Activated CD4-positive, alpha-beta T cell treated with anti-CD3 and anti-CD28 coated beads, Interleukin-2, amount 10 ng/mL, durations not matched to agents 24 days and 14 days (primary cell): ENCODE measurements at regions of chr5 and their contacts with region 1.

Region 1: GRCh38 chr5:78899922-78900362 is 85.2 kb downstream of the ARSB start:
- DNase-seq: peak; percentile 78
- H3K4me3 Mint-ChIP-seq: no peak overlapping the region
- H3K27ac Mint-ChIP-seq: no peak overlapping the region
- H3K4me1 Mint-ChIP-seq: no peaks in the 10 kb centered on the region
- H3K27me3 Mint-ChIP-seq: no peaks in the 10 kb centered on the region

Region 2: DNA sequence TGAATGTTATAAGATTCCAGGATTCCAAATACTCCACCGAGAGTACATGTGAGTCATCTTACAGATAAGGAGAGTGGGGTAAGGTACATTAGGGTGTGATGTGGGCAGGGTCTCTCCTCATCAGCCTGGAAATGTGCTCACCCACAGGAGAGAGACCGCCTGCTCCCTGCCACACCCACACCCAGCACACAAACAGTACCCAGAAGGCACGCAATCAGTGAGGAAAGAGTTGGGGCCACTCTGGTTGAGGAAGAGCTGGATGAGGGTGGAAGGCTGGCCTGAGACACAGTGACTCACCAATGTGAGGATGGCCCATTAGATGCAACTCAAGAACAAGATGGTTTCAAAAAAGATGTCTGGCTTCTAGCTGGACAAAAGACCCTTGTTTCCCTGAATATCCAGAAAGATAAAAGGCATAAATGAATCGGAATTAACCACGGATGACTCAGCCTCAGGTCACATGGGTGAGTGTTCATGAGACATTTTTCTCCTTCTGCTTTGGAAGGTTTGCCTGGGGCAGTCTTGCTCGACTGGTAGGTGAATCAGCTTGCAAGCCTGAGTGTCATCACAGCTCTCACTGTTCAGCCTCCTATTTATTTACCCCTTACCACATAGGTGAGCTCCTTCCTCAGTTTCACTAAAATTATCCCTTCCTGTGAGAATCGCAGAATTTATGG is 200.2 kb before region 1 on chr5:
- intact Hi-C with region 1: no loop called
- DNase-seq: no peak
- H3K4me3 Mint-ChIP-seq: no peak overlapping the region
- H3K27ac Mint-ChIP-seq: no peak overlapping the region
- H3K4me1 Mint-ChIP-seq: no peaks in the 10 kb centered on the region
- H3K27me3 Mint-ChIP-seq: no peaks in the 10 kb centered on the region

Region 3: DNA sequence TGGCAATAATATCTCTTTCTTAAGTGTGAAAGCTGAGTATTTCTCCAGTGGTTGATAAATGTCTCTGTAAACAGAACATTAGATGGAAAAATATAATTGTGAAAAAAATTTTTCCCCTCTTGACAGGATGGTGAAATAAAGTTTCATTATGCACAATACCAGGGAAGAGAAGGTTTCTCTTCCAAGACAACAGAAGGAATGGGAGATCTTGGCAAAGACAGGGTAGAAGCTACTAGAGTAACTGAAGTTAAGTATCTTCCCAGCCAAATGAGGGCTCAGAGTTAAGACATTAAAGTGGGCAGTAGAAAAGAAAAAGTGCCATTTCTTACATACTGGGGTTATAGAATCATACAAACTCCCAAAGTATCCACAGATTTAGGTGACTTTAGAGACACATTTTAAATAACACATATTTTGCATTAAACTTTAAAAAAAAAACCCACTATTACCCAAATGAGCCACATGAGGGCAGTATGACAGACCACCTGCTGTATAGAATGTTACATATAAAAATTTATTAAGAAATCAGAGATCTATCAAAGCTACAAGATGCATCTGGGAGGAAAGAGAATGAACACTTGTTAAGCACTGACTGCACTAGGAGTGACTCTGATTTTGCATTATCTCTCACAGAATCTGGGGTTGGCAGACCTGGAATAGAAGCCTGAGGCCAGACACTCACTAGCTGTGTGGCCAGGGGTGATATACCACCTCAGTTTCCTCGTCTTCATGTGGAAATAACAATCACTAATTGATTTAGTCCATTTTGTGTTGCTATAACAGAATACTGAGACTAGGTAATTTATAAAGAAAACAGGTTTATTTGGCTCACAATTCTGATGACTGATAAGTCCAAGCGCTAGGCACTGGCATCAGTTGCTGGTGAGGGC is 13.4 kb before region 1 on chr5:
- intact Hi-C with region 1: no loop called
- DNase-seq: no peak
- H3K4me3 Mint-ChIP-seq: no peak overlapping the region
- H3K27ac Mint-ChIP-seq: no peak overlapping the region
- H3K4me1 Mint-ChIP-seq: peaks cover 9% of the 10 kb centered on the region
- H3K27me3 Mint-ChIP-seq: peaks cover 2% of the 10 kb centered on the region

Region 4: DNA sequence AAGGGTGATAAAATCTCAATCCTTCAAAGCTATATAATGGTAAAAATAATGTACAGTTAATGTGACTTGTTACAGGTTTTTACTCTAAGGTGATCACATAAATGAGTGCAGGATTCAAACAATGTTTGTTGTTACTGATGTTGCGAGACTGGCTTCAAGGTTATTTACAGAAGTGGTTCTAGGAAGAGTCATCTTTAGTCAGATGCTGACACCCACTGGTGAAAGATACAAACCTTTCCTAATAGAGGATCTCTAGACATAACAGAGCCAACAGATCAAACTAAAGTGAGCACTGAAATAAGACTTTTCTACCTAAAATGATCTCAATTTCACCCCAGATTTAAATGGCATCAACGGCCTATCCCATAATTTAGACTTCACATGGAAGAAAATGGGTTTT is 64.9 kb after region 1 on chr5:
- intact Hi-C with region 1: loop called (anchors 2 kb)
- DNase-seq: no peak
- H3K4me3 Mint-ChIP-seq: no peak overlapping the region
- H3K27ac Mint-ChIP-seq: no peak overlapping the region
- H3K4me1 Mint-ChIP-seq: no peaks in the 10 kb centered on the region
- H3K27me3 Mint-ChIP-seq: no peaks in the 10 kb centered on the region

Region 5: GRCh38 chr5:79109527-79110492 is 209.9 kb after region 1 on chr5:
- intact Hi-C with region 1: loop called (anchors 5 kb)
- DNase-seq: peak; percentile 67
- H3K4me3 Mint-ChIP-seq: no peak overlapping the region
- H3K27ac Mint-ChIP-seq: no peak overlapping the region
- H3K4me1 Mint-ChIP-seq: peaks cover 3% of the 10 kb centered on the region
- H3K27me3 Mint-ChIP-seq: peaks cover 63% of the 10 kb centered on the region

Region 6: DNA sequence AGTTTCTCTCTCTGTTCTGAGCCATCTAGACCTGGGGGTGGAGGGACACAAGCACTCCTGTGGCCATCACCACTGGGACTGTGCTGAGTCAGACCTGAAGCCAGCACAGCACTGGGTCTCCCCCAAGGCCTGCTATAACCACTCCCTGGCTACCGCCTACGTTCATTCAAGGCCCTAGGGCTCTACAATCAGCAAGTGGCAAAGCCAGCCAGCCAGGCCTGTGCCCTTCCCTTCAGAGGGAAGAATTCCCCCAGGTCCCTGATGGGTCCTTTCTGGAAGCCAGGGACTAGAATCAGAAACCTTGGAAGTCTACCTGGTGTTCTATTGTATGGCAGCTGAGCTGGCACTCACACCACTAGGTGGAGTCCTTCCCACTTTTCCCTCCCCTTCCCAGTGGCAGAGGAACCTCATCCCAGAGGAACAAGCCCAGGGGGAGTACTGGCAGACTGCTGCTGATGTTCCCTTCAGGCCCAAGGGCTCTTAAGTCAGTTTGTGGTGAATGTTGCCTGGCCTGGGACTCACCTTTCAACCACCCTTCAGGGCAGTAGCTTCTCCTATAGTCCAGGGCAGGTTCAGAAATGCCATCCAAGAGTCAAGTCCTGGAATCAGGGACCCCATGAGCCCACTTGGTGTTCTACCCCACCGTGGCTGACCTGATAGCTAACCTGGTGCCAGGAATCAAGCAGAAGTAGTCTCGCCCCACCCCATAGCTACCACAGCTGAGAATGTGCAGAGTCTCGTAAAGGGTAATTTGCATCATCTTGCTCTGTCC is 356.0 kb after region 1 on chr5:
- intact Hi-C with region 1: no loop called
- DNase-seq: no peak
- H3K4me3 Mint-ChIP-seq: no peak overlapping the region
- H3K27ac Mint-ChIP-seq: peak overlapping the region; percentile 35
- H3K4me1 Mint-ChIP-seq: peaks cover 4% of the 10 kb centered on the region
- H3K27me3 Mint-ChIP-seq: no peaks in the 10 kb centered on the region